MCF 10A (cell line): ENCODE measurements at regions of chr7 and their contacts with region 1.

Region 1: GRCh38 chr7:100556541-100556940 is 17.2 kb downstream of the SAP25 start:
- DNase-seq: peak; percentile 64
- H3K4me3 Mint-ChIP-seq: no peak overlapping the region
- H3K27ac Mint-ChIP-seq: no peak overlapping the region
- H3K4me1 Mint-ChIP-seq: peaks cover 5% of the 10 kb centered on the region
- H3K27me3 Mint-ChIP-seq: no peaks in the 10 kb centered on the region
- CTCF ChIP-seq: no peak

Region 2: GRCh38 chr7:100342765-100343164 is 213.8 kb before region 1 on chr7:
- CTCF ChIA-PET with region 1: no interaction called
- POLR2A ChIA-PET with region 1: no interaction called
- intact Hi-C with region 1: no loop called
- DNase-seq: no peak
- H3K4me3 Mint-ChIP-seq: no peak overlapping the region
- H3K27ac Mint-ChIP-seq: no peak overlapping the region
- H3K4me1 Mint-ChIP-seq: peaks cover 27% of the 10 kb centered on the region
- H3K27me3 Mint-ChIP-seq: no peaks in the 10 kb centered on the region
- CTCF ChIP-seq: no peak

Region 3: GRCh38 chr7:100456558-100456957 is 100.0 kb before region 1 on chr7:
- CTCF ChIA-PET with region 1: interaction called, 16 read pairs
- POLR2A ChIA-PET with region 1: no interaction called
- intact Hi-C with region 1: no loop called
- DNase-seq: no peak
- H3K4me3 Mint-ChIP-seq: no peak overlapping the region
- H3K27ac Mint-ChIP-seq: no peak overlapping the region
- H3K4me1 Mint-ChIP-seq: no peaks in the 10 kb centered on the region
- H3K27me3 Mint-ChIP-seq: no peaks in the 10 kb centered on the region
- CTCF ChIP-seq: no peak

Region 4: DNA sequence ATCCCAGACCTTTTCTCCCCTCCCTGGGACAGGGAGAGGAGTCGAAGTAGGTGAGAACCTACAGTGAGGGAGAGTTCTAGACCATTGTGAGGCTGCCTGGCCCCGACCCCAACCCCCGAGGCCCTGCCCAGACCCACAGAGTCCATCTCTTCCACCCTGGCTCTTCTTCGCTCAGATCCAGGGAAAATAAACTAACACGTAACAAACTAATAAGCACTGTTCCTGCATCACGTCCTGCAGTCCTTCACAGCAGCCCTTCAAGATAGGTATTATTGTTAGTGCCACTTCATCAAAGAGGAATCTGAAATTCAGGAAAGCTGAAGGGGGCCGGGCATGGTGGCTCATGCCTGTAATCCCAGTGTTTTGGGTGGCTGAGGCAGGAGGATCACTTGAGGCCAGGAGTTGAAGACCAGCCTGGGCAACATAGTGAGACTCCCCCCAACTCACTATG is 92.3 kb before region 1 on chr7 and contains the start of gene SPACDR:
- CTCF ChIA-PET with region 1: interaction called, 95 read pairs
- POLR2A ChIA-PET with region 1: interaction called, 3 read pairs
- intact Hi-C with region 1: loop called (anchors 1 kb)
- DNase-seq: no peak
- H3K4me3 Mint-ChIP-seq: no peak within 1 kb of the TSS
- H3K27ac Mint-ChIP-seq: no peak within 1 kb of the TSS
- H3K4me1 Mint-ChIP-seq: no peaks in the 10 kb centered on the region
- H3K27me3 Mint-ChIP-seq: no peaks in the 10 kb centered on the region
- CTCF ChIP-seq: no peak
- total RNA-seq, gene SPACDR: 0.49 and 0.74 TPM in 2 replicates

Region 5: GRCh38 chr7:100469227-100470044 is 87.1 kb before region 1 on chr7:
- CTCF ChIA-PET with region 1: interaction called, 95 read pairs
- POLR2A ChIA-PET with region 1: interaction called, 3 read pairs
- intact Hi-C with region 1: loop called (anchors 1 kb)
- DNase-seq: peak; percentile 64
- H3K4me3 Mint-ChIP-seq: no peak overlapping the region
- H3K27ac Mint-ChIP-seq: no peak overlapping the region
- H3K4me1 Mint-ChIP-seq: peaks cover 5% of the 10 kb centered on the region
- H3K27me3 Mint-ChIP-seq: no peaks in the 10 kb centered on the region
- CTCF ChIP-seq: peak; percentile 94

Region 6: DNA sequence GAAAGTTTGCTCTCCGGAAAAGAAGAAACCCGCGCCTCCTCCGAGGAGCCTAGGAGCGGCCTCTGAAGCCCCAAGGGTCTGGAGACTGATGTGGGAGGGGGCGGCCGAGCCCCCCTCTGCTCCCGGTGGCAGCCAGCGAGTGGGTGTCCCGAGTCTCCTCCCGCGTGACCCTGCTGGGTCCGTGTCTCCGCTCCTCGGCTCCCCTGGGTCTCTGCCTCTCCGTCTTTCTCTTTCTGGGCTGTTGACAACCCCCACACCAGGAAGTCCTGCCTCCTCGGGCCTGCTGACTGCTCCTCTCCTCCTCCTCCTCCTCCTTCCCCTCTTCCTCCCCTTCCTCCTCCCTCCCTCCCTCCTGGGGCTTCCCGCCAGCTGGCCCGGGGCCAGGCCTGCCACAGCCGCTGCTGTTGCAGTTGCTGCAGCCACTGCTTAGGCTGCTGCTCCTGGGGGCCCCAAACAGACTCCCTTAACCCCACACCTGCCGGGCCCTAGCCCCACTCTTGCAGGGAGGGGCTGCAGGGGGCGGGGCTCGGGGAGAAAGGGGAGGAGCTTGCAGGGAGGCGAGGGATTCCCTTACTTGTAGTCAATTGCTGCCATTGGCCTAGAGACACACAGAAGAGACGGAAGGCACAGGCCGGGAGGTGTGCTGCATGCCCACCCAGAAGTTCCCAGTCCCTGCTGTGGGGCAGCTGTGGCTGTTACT is 77.4 kb before region 1 on chr7 and contains the start of gene TSC22D4:
- CTCF ChIA-PET with region 1: interaction called, 45 read pairs
- POLR2A ChIA-PET with region 1: interaction called, 11 read pairs
- intact Hi-C with region 1: no loop called
- DNase-seq: peak; percentile 93
- H3K4me3 Mint-ChIP-seq: peak within 1 kb of the TSS; percentile 93
- H3K27ac Mint-ChIP-seq: peak within 1 kb of the TSS; percentile 99
- H3K4me1 Mint-ChIP-seq: peaks cover 7% of the 10 kb centered on the region
- H3K27me3 Mint-ChIP-seq: no peaks in the 10 kb centered on the region
- CTCF ChIP-seq: no peak
- total RNA-seq, gene TSC22D4: 36.0 and 43.8 TPM in 2 replicates

Region 7: DNA sequence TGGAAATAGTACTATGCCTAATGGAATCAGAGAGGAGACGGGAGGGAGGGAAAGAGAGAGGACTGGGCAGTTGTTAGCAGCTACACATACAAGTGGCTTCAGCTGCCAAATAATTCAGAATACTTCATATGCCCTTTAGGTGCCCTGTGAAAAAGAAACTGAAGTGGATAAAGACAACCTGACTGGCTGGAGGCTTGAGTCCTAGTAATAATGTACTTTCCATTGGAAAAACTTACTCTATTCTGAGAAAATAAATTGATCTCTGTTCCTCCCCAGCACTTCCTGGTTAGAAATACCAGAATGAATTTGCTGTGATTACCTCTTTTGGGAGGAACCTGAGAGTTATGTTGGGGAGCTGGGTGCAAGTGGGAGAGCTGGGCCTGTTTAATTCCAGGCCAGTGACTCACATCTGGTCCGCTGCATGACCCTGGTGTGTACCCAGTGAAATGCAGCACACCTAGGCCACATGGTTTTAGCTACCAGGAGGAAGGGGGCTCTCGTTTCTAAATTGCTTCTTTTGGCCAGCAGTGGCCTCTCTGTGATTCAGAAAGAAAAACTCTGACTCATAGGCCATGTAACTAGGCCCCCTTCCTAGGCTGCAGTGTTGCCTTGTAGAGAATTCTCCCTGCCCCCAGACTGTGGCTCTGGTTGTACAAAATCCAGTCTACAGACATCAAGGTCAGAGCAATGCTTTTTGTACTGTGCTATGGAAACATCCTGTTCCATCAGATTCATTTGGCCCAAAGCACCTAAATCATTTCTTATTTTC is 11.0 kb before region 1 on chr7:
- CTCF ChIA-PET with region 1: interaction called, 52 read pairs
- POLR2A ChIA-PET with region 1: interaction called, 23 read pairs
- intact Hi-C with region 1: no loop called
- DNase-seq: peak; percentile 94
- H3K4me3 Mint-ChIP-seq: peak overlapping the region; percentile 1
- H3K27ac Mint-ChIP-seq: peak overlapping the region; percentile 78
- H3K4me1 Mint-ChIP-seq: peaks cover 48% of the 10 kb centered on the region
- H3K27me3 Mint-ChIP-seq: no peaks in the 10 kb centered on the region
- CTCF ChIP-seq: no peak

Region 8: DNA sequence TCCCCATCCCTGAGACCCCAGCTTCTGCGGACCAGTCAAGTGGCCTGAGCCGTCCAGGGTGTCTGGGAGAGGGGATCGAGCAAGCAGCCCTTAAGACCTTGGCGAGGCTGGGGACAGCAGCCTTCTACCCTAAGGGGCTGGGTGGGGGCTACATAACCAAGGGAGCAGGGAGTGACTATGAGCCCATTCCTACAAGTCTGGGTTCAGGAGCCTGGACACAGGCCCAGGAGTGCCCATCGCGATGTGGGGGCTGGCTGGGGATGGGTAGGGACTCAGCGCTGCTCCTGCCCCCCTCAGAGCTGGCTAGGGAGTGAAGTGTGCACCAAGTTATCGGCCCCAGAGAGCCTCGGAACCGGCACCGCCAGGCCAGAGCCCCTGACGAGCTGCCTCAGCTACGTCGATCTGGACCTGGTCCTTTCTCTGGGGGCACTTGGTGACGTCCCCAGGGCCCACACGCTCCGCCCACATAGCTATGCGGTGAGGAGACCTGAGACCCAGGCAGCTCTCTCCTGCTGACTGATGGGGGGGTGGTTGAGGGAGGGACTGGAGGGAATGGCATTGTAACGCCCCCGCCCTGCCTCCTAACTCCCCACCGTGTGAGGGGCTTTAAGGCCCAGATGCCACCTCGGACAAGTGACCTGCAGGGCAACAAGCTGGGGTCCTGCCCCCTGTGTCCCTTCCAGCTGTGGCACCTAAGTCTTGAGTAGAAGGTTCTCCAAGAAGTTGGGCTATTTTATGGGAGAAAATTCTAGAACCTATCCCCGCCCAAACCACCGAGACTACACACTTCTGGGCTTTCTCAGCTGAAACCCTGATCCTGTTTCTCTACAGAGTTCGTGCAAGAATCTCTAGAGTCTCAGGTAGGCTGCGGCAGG is 14.7 kb after region 1 on chr7:
- CTCF ChIA-PET with region 1: interaction called, 14 read pairs
- POLR2A ChIA-PET with region 1: no interaction called
- intact Hi-C with region 1: no loop called
- DNase-seq: no peak
- H3K4me3 Mint-ChIP-seq: no peak overlapping the region
- H3K27ac Mint-ChIP-seq: no peak overlapping the region
- H3K4me1 Mint-ChIP-seq: no peaks in the 10 kb centered on the region
- H3K27me3 Mint-ChIP-seq: no peaks in the 10 kb centered on the region
- CTCF ChIP-seq: no peak

Region 9: GRCh38 chr7:100745184-100745583 is 188.6 kb after region 1 on chr7:
- CTCF ChIA-PET with region 1: no interaction called
- POLR2A ChIA-PET with region 1: no interaction called
- intact Hi-C with region 1: no loop called
- DNase-seq: no peak
- H3K4me3 Mint-ChIP-seq: peak overlapping the region; percentile 58
- H3K27ac Mint-ChIP-seq: no peak overlapping the region
- H3K4me1 Mint-ChIP-seq: no peaks in the 10 kb centered on the region
- H3K27me3 Mint-ChIP-seq: peaks cover 13% of the 10 kb centered on the region
- CTCF ChIP-seq: no peak

Region 10: DNA sequence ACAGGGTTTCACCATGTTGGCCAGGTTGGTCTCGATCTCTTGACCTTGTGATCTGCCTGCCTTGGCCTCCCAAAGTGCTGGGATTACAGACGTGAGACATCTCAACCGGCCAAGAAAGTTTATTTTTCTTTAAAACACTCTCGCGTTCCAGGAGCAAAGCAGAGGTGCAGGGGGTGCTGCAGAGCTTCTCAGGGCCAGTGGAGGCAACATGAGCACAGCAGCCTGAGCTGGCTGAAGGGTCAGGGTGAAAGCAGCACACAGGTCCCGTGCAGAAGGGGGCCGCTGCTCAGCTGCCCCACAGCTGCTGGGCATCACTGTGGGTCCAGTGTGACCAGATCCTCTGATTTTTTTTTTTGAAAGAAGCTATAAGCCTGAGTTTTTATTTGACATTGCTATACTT is 224.7 kb after region 1 on chr7:
- CTCF ChIA-PET with region 1: no interaction called
- POLR2A ChIA-PET with region 1: no interaction called
- intact Hi-C with region 1: no loop called
- DNase-seq: no peak
- H3K4me3 Mint-ChIP-seq: no peak overlapping the region
- H3K27ac Mint-ChIP-seq: no peak overlapping the region
- H3K4me1 Mint-ChIP-seq: no peaks in the 10 kb centered on the region
- H3K27me3 Mint-ChIP-seq: no peaks in the 10 kb centered on the region
- CTCF ChIP-seq: no peak

Region 11: GRCh38 chr7:100965723-100966541 is 409.4 kb after region 1 on chr7:
- CTCF ChIA-PET with region 1: no interaction called
- POLR2A ChIA-PET with region 1: no interaction called
- intact Hi-C with region 1: no loop called
- DNase-seq: peak; percentile 58
- H3K4me3 Mint-ChIP-seq: peak overlapping the region; percentile 60
- H3K27ac Mint-ChIP-seq: no peak overlapping the region
- H3K4me1 Mint-ChIP-seq: peaks cover 12% of the 10 kb centered on the region
- H3K27me3 Mint-ChIP-seq: peaks cover 69% of the 10 kb centered on the region
- CTCF ChIP-seq: peak; percentile 79